HCT116 (cell line): ENCODE measurements at regions of chr4 and their contacts with region 1.

Region 1: DNA sequence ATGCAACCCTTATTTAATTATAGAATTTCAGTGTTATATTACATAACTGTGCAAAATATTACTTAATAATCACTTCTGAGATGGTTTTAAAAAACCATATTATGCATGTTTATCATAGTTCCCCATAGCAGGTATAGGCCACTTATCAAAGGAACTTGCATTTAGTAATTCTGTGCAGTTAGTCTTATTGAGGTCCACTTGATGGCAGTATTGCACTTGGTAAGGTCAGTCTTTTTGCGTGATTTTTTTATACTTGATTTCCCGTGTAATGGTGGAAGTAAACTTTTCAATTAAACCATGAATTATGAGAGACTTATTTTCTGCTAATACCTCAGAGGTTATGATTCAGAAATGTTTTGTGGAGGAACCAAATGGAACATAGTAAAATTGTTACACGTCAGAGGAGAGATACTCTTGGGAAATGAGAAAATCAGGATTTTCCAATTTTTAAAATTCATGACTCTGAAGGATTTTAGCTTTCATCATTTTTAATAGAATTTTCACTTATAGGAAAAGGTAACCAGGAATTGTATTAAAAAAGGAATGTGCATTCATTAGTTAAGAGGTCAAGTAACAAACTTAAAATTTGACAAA is 230.0 kb downstream of the CCSER1 start:
- DNase-seq: peak; percentile 74
- ATAC-seq: peak; percentile 68
- H3K4me3 ChIP-seq: no peak overlapping the region; a peak in 1 of 4 replicates
- H3K27ac ChIP-seq: no peak overlapping the region
- H3K4me1 ChIP-seq: no peaks in the 10 kb centered on the region
- H3K27me3 ChIP-seq: no peaks in the 10 kb centered on the region
- CTCF ChIP-seq: peak; percentile 41 to 81 (median 52); a peak in 5 of 6 replicates
- POLR2A ChIP-seq: no peak
- RAD21 ChIP-seq: peak; percentile 86

Region 2: DNA sequence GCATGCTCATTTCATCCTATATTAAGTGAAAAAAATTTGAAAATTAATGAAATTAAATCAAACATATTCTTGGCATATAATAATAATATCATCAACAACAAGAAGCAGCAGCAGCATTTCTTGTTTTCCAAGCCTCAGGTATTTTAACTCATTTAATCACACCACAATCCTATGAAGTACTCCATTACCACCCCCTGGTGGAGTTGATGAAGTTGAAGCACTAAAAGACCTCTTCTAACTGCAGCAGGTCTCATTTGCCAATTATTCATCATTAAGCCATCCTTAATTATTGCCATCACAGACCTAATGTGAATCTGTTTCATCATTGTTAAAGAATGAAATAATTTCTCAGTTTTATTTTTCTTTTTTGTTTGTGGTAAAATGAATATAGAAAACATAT is 1145.2 kb after region 1 on chr4:
- CTCF ChIA-PET with region 1: no interaction called
- POLR2A ChIA-PET with region 1: no interaction called
- RAD21 ChIA-PET with region 1: no interaction called
- intact Hi-C with region 1: loop called (anchors 5 kb)
- DNase-seq: peak; percentile 18
- ATAC-seq: peak; percentile 57; the same call in 1 of the 2 replicates
- H3K4me3 ChIP-seq: no peak overlapping the region
- H3K27ac ChIP-seq: no peak overlapping the region
- H3K4me1 ChIP-seq: no peaks in the 10 kb centered on the region
- H3K27me3 ChIP-seq: no peaks in the 10 kb centered on the region
- CTCF ChIP-seq: peak; percentile 17 to 45 (median 26); a peak in 4 of 6 replicates
- POLR2A ChIP-seq: no peak
- RAD21 ChIP-seq: peak; percentile 54

Region 3: GRCh38 chr4:92050875-92051274 is 1693.7 kb after region 1 on chr4:
- CTCF ChIA-PET with region 1: no interaction called
- POLR2A ChIA-PET with region 1: no interaction called
- RAD21 ChIA-PET with region 1: no interaction called
- intact Hi-C with region 1: loop called (anchors 10 kb)
- DNase-seq: no peak
- ATAC-seq: no peak
- H3K4me3 ChIP-seq: no peak overlapping the region
- H3K27ac ChIP-seq: no peak overlapping the region
- H3K4me1 ChIP-seq: no peaks in the 10 kb centered on the region
- H3K27me3 ChIP-seq: no peaks in the 10 kb centered on the region
- CTCF ChIP-seq: no peak
- POLR2A ChIP-seq: no peak
- RAD21 ChIP-seq: no peak

Region 4: GRCh38 chr4:92163348-92163747 is 1806.1 kb after region 1 on chr4:
- CTCF ChIA-PET with region 1: no interaction called
- POLR2A ChIA-PET with region 1: no interaction called
- RAD21 ChIA-PET with region 1: no interaction called
- intact Hi-C with region 1: loop called (anchors 10 kb)
- DNase-seq: peak; percentile 16
- ATAC-seq: peak; percentile 82
- H3K4me3 ChIP-seq: no peak overlapping the region
- H3K27ac ChIP-seq: no peak overlapping the region
- H3K4me1 ChIP-seq: no peaks in the 10 kb centered on the region
- H3K27me3 ChIP-seq: no peaks in the 10 kb centered on the region
- CTCF ChIP-seq: peak; percentile 14 to 64 (median 50); a peak in 3 of 6 replicates
- POLR2A ChIP-seq: no peak
- RAD21 ChIP-seq: peak; percentile 49